ENCODE measurements at regions of chr15 and their contacts with region 1.

Region 1: GRCh38 chr15:45198337-45199135 is 10.8 kb upstream of the SHF start:
- DNase-seq: peak; percentile 99
- H3K4me3 Mint-ChIP-seq: no peak overlapping the region
- H3K27ac Mint-ChIP-seq: no peak overlapping the region
- H3K4me1 Mint-ChIP-seq: peaks cover 9% of the 10 kb centered on the region
- H3K27me3 Mint-ChIP-seq: no peaks in the 10 kb centered on the region

Region 2: GRCh38 chr15:44711356-44712107 is 487.0 kb before region 1 on chr15 and contains the start of gene B2M:
- intact Hi-C with region 1: loop called (anchors 5 kb)
- DNase-seq: peak; percentile 99
- H3K4me3 Mint-ChIP-seq: peak within 1 kb of the TSS; percentile 94
- H3K27ac Mint-ChIP-seq: peak within 1 kb of the TSS; percentile 100
- H3K4me1 Mint-ChIP-seq: peaks cover 44% of the 10 kb centered on the region
- H3K27me3 Mint-ChIP-seq: no peaks in the 10 kb centered on the region
- total RNA-seq, gene B2M: 4,380 and 4,481 TPM in 2 replicates

Region 3: DNA sequence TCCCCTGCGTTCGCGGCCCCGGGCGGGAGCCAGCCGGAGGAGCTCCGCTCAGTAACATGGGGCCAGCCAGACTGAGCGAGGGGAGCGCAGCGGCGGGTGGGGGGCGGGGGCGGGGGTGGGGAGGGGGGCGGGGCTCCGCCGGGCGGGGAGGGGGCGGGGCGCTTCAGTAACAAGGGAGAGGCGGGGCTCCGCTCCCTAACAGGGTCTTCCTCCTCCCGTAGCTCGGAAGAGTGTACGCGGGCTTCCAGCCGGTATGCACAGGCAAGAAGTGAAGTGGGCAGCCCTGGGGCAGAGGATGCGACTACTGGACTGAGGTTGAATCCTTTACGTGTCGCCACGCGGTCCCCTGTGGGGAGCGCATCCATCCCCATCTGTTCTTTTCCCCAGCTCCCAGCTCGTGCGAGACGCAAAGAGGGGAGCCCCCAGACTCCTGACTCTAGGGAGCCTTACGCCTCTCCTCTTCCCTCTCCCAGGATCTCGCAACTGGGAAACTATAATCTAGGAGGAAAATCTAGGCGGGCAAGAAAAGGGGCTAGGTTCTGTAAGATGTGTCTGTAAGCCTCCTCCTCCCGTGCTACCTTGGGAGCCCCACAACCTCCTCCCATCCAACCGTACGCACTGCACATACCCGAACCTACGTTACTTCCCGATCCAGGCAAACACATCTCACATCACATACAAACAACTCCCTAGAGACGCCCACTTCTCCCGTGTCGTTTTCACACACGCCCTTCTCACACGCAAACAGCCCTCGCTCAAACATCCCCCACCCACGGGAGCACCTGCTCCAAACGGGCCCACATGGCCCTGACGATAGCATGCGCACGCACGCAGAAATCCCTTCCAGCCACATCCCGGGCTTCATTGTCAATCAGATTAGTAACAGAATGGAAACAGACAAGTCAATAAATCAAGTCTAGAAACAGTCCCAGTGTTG is 10.4 kb before region 1 on chr15 and contains the start of gene SHF:
- intact Hi-C with region 1: loop called (anchors 1 kb)
- DNase-seq: peak; percentile 84
- H3K4me3 Mint-ChIP-seq: peak within 1 kb of the TSS; percentile 86
- H3K27ac Mint-ChIP-seq: peak within 1 kb of the TSS; percentile 95
- H3K4me1 Mint-ChIP-seq: peaks cover 26% of the 10 kb centered on the region
- H3K27me3 Mint-ChIP-seq: peaks cover 11% of the 10 kb centered on the region
- total RNA-seq, gene SHF: 14.4 and 16.1 TPM in 2 replicates

Region 4: DNA sequence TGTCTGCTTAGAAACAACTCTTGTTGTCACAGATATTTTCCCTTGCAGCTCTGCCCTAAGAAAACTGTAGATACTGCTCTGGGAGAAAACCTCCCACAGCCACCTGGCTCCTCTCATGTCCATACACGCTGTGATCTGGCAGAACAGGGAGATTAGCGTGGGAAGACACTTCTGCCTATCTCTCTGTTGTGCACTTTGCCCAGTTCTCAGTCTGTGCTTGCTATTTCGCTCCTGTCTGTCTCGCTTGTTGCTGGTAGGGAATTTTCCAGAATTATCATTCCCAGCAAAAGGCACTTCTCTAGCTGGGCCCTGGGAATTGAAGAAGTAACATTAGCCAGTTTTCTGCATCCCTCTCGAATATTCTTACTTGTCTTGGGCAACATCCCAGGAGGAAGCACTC is 187.9 kb after region 1 on chr15:
- intact Hi-C with region 1: no loop called
- DNase-seq: no peak
- H3K4me3 Mint-ChIP-seq: no peak overlapping the region
- H3K27ac Mint-ChIP-seq: no peak overlapping the region
- H3K4me1 Mint-ChIP-seq: no peaks in the 10 kb centered on the region
- H3K27me3 Mint-ChIP-seq: peaks cover 66% of the 10 kb centered on the region

Region 5: DNA sequence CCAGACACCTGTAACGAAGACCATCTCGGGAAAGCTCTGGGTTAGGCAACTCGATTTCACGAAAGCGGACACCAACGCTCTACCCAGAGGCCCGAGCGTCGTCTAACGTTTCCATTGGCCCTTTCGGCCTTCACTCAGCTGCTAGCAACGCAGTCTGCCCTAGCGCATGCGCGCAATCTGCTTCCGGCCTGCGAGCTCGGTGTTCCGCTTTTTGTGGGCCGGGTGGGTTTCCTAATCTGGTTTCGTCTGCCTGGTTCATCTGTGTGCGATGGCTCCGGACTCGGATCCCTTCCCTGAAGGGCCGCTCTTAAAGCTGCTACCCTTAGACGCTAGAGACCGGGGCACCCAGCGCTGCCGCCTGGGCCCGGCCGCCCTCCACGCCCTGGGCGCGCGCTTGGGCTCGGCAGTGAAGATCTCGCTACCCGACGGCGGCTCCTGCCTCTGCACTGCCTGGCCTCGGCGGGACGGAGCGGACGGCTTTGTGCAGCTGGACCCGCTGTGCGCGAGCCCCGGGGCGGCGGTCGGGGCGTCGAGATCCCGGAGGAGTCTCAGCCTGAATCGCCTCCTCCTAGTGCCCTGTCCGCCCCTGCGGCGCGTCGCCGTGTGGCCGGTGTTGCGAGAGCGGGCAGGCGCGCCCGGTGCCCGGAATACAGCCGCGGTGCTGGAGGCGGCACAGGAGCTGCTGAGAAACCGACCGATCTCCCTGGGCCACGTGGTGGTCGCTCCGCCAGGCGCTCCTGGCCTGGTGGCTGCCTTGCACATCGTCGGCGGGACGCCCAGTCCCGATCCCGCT is 203.8 kb after region 1 on chr15:
- intact Hi-C with region 1: loop called (anchors 1 kb)
- DNase-seq: peak; percentile 98
- H3K4me3 Mint-ChIP-seq: peak overlapping the region; percentile 90
- H3K27ac Mint-ChIP-seq: peak overlapping the region; percentile 87
- H3K4me1 Mint-ChIP-seq: peaks cover 26% of the 10 kb centered on the region
- H3K27me3 Mint-ChIP-seq: peaks cover 5% of the 10 kb centered on the region

Region 6: DNA sequence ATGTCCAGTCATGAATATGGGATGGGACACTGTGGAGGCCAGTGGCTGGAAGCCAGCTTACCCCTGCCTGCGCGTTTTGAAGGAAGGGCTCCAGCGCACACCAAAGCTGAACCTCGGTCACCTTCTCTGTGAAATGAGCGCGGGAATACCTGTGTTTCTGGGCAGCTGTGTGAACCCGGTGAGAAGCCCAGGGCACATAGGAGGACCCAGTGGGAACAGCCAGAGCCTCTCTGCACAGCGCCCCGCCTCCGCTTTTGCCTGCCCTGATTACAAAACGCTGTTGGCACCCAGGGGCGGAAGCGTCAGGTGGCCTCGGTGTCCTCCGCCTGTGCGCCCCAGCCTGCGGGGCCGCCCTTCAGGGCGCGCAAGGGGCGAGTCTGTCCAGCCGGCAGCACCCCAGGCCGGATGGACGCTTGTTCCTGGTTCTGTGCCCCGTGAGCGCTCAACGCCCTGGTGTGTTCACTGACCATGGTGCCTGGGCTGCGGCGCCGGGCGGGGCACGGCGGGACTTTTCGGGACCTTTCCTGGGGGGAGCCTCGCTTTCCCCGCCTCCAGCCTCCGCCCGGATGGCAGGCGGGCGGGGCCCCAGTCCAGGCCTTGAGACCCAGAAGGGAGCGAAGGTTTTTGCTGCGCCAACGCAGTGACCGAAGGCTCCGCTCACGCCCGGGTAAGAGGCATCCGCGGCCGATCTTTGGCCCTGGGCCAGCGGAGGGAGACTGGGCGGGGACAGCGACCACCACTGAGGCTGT is 436.1 kb after region 1 on chr15 and contains the start of gene SQOR:
- intact Hi-C with region 1: loop called (anchors 1 kb)
- DNase-seq: peak; percentile 92
- H3K4me3 Mint-ChIP-seq: peak within 1 kb of the TSS; percentile 100
- H3K27ac Mint-ChIP-seq: peak within 1 kb of the TSS; percentile 98
- H3K4me1 Mint-ChIP-seq: peaks cover 38% of the 10 kb centered on the region
- H3K27me3 Mint-ChIP-seq: peaks cover 2% of the 10 kb centered on the region
- total RNA-seq, gene SQOR: 103 and 108 TPM in 2 replicates

Measured in activated CD4-positive, alpha-beta T cell treated with anti-CD3 and anti-CD28 coated beads, Interleukin-2, amount 10 ng/mL, durations not matched to agents 24 days and 14 days (primary cell).